ENCODE measurements at regions of chr17 and their contacts with region 1.

Region 1: GRCh38 chr17:18039535-18040260 is 490 bp downstream of the GID4 start:
- DNase-seq: peak in 1 of 2 donors; percentile 90
- H3K4me3 ChIP-seq: peak overlapping the region; percentile 67
- CTCF ChIP-seq: no peak
- POLR2A ChIP-seq: no peak

Region 2: DNA sequence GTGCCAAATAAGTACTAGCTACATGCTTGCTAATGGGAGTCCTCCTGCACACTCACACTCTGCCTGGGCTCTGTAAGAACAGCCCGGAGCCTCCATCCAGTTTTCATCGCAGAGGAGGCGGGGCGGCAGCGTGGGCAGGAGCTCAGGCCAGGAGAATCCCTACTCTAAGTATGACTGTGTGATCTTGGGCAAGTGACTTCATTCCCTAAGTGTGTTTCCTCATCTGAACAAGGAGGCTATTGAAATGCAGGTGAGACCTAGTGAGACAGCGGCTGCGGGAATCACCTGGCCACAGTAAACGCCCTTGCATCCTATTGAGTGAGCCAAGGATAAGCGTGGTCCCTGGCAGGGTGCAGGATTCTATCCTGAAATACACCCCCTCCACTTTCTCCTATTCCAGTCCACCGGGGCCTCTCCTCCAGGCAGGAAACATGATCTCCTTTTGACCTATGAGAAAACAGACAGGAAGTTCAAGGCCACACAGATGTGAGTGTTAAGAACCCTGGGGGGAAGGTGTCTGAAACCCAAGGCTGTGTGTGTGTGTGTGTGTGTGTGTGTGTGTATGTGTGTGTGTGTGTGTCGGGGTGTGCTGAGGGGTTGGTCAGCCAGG is 363.7 kb before region 1 on chr17:
- intact Hi-C with region 1: loop called (anchors 10 kb)
- DNase-seq: no peak
- H3K4me3 ChIP-seq: no peak overlapping the region
- CTCF ChIP-seq: no peak
- POLR2A ChIP-seq: no peak

Region 3: GRCh38 chr17:18184143-18185031 is 144.7 kb after region 1 on chr17:
- intact Hi-C with region 1: no loop called
- DNase-seq: peak; percentile 41 to 91
- H3K4me3 ChIP-seq: peak overlapping the region; percentile 84
- CTCF ChIP-seq: no peak
- POLR2A ChIP-seq: no peak

Measured in lower leg skin (tissue), 4 donors.